ENCODE measurements at regions of chr5 and their contacts with region 1.

Region 1: GRCh38 chr5:43120720-43121564 is at the start of gene ZNF131:
- DNase-seq: peak; percentile 90 to 100 (median 95)

Region 2: GRCh38 chr5:43085453-43085852 is 35.5 kb before region 1 on chr5:
- intact Hi-C with region 1: no loop called
- DNase-seq: no peak

Region 3: DNA sequence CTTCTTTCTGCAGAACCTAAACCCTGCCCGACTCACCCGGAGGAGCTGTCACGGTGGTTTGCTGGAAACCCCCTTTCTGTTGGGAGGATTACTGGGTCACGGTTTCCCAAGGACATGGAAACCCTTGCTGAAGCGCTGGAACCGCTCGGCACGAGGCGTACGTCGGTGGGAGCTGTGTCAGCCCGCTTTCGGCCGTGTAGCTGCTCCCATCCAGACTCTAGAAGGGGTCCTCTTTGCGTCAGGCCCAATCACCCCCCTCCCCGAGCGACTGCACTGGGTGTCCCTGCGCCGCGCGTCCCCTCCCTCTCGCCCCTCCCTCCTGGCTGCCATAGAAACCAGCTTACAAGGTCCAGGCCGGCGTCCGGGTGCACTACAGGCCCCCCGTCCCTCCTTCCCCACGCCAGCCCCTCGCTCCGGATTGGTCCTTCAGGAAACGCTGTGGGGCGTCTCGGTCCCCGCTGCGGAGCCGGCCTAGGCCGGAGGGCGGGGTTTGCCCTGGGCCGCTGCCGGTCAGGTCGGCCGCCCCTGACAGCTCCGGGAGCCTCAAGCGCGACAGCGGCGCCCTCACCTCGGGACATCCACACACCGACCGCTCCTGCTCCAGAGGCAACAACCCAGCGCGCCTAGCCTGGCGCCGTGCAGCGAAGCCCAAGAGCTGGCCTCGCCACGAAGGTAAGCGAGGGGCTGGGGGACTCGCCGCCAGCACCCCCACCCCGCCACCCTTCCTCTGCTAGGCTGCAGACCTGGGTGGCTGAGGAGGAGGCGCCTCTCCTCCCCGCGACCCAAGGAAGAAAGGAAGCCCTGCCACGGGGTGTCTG is 71.0 kb after region 1 on chr5 and contains the start of gene NIM1K:
- intact Hi-C with region 1: loop called (anchors 1 kb)
- DNase-seq: peak; percentile 83 to 98 (median 90)

Measured in posterior cingulate gyrus (tissue), 11 donors.